SK-N-SH (cell line): ENCODE measurements at regions of chr11 and their contacts with region 1.

Region 1: DNA sequence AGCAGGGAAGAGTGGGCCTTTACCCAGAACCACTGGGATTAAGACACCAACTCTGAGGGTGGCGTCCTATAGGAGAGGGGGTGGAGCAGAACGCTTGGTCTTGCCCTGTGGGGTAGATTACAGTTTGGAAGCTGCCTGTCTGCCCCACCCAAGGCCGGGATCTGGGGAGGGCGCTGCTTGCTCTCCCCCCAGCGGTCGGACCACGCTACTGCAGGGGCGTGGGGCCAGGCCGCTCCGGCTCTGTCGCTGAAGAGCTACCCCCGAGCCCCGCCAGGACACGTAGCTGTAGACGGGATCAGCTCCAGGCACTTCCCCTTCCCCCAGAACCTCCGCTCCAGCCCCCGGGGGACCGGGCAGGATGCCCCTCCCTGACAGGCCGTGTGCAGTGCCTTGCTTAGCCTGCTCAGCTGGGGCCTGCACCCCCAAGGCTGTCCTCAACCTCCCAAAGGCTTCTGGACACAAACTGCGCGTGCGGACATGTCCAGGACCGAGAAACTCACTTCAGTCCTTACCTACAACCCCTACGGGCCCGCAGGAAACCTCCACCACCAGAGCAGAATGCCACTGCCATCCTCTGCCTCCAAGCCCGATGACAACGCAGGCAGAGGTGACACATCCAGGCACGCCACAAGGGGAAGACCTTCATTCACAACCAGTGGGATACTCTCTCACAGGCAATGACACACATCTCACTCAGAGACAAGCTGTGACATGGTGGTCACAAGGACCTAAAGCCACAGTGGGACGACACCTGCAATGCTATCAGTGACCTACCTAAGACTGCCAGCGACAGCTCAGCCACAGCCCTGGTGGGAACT is 3.6 kb downstream of the AHNAK start:
- DNase-seq: peak; percentile 90
- H3K4me3 ChIP-seq: peak overlapping the region; percentile 75 to 98
- H3K27ac ChIP-seq: peak overlapping the region in 1 of 2 experiments; percentile 82; a peak in 2 of 4 replicates
- H3K4me1 ChIP-seq: peaks cover 50 to 72% of the 10 kb centered on the region in 2 experiments
- H3K27me3 ChIP-seq: no peaks in the 10 kb centered on the region
- CTCF ChIP-seq: peak; percentile 92
- EP300 ChIP-seq: no peak
- RAD21 ChIP-seq: peak; percentile 87

Region 2: GRCh38 chr11:62400760-62401159 is 142.2 kb before region 1 on chr11:
- CTCF ChIA-PET with region 1: interaction called, 195 read pairs
- POLR2A ChIA-PET with region 1: interaction called, 8 read pairs
- DNase-seq: peak; percentile 93
- H3K4me3 ChIP-seq: no peak overlapping the region
- H3K27ac ChIP-seq: peak overlapping the region; percentile 52 to 85; a peak in 3 of 4 replicates
- H3K4me1 ChIP-seq: peaks cover 29 to 52% of the 10 kb centered on the region in 2 experiments; a peak in 3 of 4 replicates
- H3K27me3 ChIP-seq: no peaks in the 10 kb centered on the region
- CTCF ChIP-seq: no peak
- EP300 ChIP-seq: peak; percentile 86 to 90; a peak in 3 of 4 replicates
- RAD21 ChIP-seq: peak; percentile 32

Region 3: GRCh38 chr11:62427630-62428233 is 115.2 kb before region 1 on chr11:
- CTCF ChIA-PET with region 1: interaction called, 183 read pairs
- POLR2A ChIA-PET with region 1: interaction called, 6 read pairs
- DNase-seq: peak; percentile 47
- H3K4me3 ChIP-seq: no peak overlapping the region
- H3K27ac ChIP-seq: peak overlapping the region; percentile 76 to 77
- H3K4me1 ChIP-seq: peaks cover 18 to 39% of the 10 kb centered on the region in 2 experiments
- H3K27me3 ChIP-seq: no peaks in the 10 kb centered on the region
- CTCF ChIP-seq: no peak
- EP300 ChIP-seq: peak in 1 of 2 experiments; percentile 79; a peak in 2 of 4 replicates
- RAD21 ChIP-seq: peak; percentile 18; the same call in 1 of the 2 replicates

Region 4: DNA sequence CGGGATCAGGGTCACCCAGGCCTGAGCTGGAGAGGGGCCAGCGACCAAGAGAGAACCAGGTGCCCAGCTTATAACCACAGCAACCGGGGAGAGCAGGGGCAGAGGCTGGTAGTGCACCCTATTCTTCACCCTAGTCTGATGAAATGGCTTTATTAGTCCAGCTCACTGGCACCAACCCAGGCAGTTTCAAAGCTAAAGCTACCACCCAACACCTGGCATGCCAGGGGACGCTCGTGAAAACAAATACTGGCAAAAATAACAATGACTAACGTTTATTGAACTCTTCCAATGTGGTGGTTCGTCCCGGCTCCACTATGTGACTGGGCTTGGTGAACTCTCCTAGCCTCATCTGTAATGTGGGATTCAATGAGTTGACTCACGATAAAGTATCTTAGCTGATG is 93.5 kb before region 1 on chr11:
- CTCF ChIA-PET with region 1: interaction called, 16 read pairs
- POLR2A ChIA-PET with region 1: no interaction called
- DNase-seq: no peak
- H3K4me3 ChIP-seq: no peak overlapping the region
- H3K27ac ChIP-seq: no peak overlapping the region
- H3K4me1 ChIP-seq: peaks cover 6% of the 10 kb centered on the region in 2 experiments
- H3K27me3 ChIP-seq: no peaks in the 10 kb centered on the region
- CTCF ChIP-seq: no peak
- EP300 ChIP-seq: no peak
- RAD21 ChIP-seq: no peak

Region 5: GRCh38 chr11:62487738-62488551 is 55.0 kb before region 1 on chr11:
- CTCF ChIA-PET with region 1: interaction called, 12 read pairs
- POLR2A ChIA-PET with region 1: no interaction called
- DNase-seq: no peak
- H3K4me3 ChIP-seq: no peak overlapping the region
- H3K27ac ChIP-seq: no peak overlapping the region
- H3K4me1 ChIP-seq: no peaks in the 10 kb centered on the region
- H3K27me3 ChIP-seq: no peaks in the 10 kb centered on the region
- CTCF ChIP-seq: no peak
- EP300 ChIP-seq: no peak
- RAD21 ChIP-seq: no peak

Region 6: GRCh38 chr11:62516736-62517371 is 26.1 kb before region 1 on chr11:
- CTCF ChIA-PET with region 1: interaction called, 11 read pairs
- POLR2A ChIA-PET with region 1: no interaction called
- DNase-seq: no peak
- H3K4me3 ChIP-seq: no peak overlapping the region
- H3K27ac ChIP-seq: no peak overlapping the region
- H3K4me1 ChIP-seq: no peaks in the 10 kb centered on the region
- H3K27me3 ChIP-seq: no peaks in the 10 kb centered on the region
- CTCF ChIP-seq: no peak
- EP300 ChIP-seq: no peak
- RAD21 ChIP-seq: no peak

Region 7: GRCh38 chr11:62591448-62592145 is 48.6 kb after region 1 on chr11 and contains the start of gene TUT1:
- CTCF ChIA-PET with region 1: interaction called, 14 read pairs
- POLR2A ChIA-PET with region 1: interaction called, 5 read pairs
- DNase-seq: peak; percentile 83
- H3K4me3 ChIP-seq: peak within 1 kb of the TSS; percentile 77 to 78
- H3K27ac ChIP-seq: peak within 1 kb of the TSS; percentile 86 to 94
- H3K4me1 ChIP-seq: peaks cover 13 to 17% of the 10 kb centered on the region in 2 experiments; a peak in 3 of 4 replicates
- H3K27me3 ChIP-seq: no peaks in the 10 kb centered on the region
- CTCF ChIP-seq: no peak; the same call in 1 of the 2 replicates
- EP300 ChIP-seq: 0 out of 4 replicates have a peak, but pooled peaks of 1 of the 2 experiments have one; percentile 22
- RAD21 ChIP-seq: no peak
- polyA plus RNA-seq, gene TUT1: 27.3 and 30.0 TPM in 2 replicates